ENCODE measurements at regions of chr5 and their contacts with region 1.

Region 1: DNA sequence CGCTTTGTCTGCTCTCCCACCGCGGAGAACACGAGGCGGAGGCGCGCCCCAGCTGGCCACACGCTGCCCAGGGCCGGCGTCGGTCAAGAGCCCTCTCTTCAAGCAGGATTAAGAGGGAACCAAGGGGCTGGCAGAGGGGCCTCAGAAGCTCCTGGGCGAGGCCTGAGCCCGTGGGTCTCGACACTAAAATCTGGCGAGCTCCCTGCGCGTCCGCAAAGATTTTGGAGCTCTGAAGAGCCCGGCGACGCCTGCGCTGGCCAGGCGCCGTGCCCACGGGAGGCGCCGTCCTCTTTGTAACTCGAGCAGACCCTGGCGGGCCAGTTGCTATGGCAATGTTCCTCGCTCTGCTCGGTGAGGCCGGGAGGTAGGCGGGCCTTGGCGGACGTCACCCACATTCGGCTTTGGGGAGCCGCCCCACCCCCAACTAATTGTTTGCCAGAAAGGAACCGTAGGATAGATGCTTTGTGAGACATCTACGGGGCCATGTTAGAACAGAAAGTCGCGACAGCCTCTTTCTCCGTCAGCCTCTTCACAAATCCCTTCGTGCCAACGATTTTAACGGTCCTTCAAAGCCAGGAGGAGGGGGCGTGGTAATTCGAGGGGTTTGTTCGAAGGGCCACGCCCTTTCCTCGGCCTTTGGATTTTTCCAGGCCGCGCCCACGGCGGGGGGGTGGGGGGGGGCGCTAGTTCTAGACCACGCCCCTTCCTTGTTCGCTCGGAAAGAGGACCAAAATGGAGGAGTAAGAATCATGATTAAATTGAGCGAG is 714 bp upstream of the CNOT8 start:
- DNase-seq: peak; percentile 78 to 94
- ATAC-seq: peak; percentile 53 to 75 (median 59)
- H3K4me3 ChIP-seq: peak overlapping the region; percentile 80
- H3K4me3 Mint-ChIP-seq: peak overlapping the region; percentile 94
- H3K27ac ChIP-seq: peak overlapping the region; percentile 98
- H3K27ac Mint-ChIP-seq: peak overlapping the region; percentile 96 to 98
- H3K4me1 ChIP-seq: peaks cover 22% of the 10 kb centered on the region
- H3K4me1 Mint-ChIP-seq: peaks cover 55 to 57% of the 10 kb centered on the region in 2 donors
- H3K27me3 ChIP-seq: no peaks in the 10 kb centered on the region
- H3K27me3 Mint-ChIP-seq: no peaks in the 10 kb centered on the region
- CTCF ChIP-seq: no peak

Region 2: DNA sequence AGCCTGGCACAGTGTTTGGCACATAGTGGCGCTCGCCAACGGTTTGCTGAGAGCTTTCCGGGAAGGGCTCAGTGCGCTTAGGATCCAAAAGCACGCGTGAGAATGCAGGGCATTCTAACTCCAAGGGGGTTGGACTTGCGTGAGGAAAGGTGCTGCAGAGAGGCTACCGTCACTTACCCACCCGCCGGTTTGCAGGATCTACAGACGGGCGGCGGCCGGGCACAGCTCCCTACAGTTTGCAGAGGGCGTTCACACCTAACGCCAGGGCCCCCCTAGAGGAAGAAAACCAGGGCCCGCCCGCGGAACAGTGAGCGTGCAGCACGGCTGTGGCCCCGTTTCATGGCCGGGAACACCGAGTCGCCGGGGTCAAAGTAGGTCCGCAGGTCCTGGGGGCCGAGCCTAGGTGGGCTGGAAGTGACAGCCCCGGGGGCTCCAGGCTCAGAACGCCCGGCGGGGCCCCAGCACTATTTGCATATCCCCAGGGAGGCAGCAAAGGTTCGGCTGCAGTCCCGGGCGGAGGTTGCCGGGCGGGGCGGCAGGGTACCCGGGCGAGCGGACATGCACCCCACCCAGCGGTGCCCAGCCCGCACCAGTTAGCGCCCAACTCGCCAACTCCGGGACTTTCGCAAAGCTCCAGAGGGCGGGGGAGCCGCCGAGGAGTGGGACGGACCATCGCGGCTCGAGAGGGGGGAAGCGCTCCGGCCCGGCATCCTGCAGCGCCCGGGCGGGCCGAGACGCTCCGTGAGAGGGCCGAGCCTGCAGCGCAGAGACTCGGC is 667.7 kb before region 1 on chr5:
- intact Hi-C with region 1: loop called (anchors 5 kb)
- DNase-seq: peak; percentile 83 to 93
- ATAC-seq: peak; percentile 89 to 96 (median 90)
- H3K4me3 ChIP-seq: peak overlapping the region; percentile 96
- H3K4me3 Mint-ChIP-seq: peak overlapping the region; percentile 92
- H3K27ac ChIP-seq: peak overlapping the region; percentile 84
- H3K27ac Mint-ChIP-seq: peak overlapping the region; percentile 80 to 88
- H3K4me1 ChIP-seq: peaks cover 29% of the 10 kb centered on the region
- H3K4me1 Mint-ChIP-seq: peaks cover 46 to 54% of the 10 kb centered on the region in 2 donors
- H3K27me3 ChIP-seq: no peaks in the 10 kb centered on the region
- H3K27me3 Mint-ChIP-seq: no peaks in the 10 kb centered on the region
- CTCF ChIP-seq: peak; percentile 41

Region 3: GRCh38 chr5:154445422-154446182 is 412.1 kb before region 1 on chr5 and contains the start of gene SAP30L:
- intact Hi-C with region 1: loop called (anchors 5 kb)
- DNase-seq: peak; percentile 97
- ATAC-seq: peak; percentile 94 to 99 (median 95)
- H3K4me3 ChIP-seq: peak within 1 kb of the TSS; percentile 99
- H3K4me3 Mint-ChIP-seq: peak within 1 kb of the TSS; percentile 99
- H3K27ac ChIP-seq: peak within 1 kb of the TSS; percentile 76
- H3K27ac Mint-ChIP-seq: peak within 1 kb of the TSS; percentile 92 to 99
- H3K4me1 ChIP-seq: peaks cover 24% of the 10 kb centered on the region
- H3K4me1 Mint-ChIP-seq: peaks cover 56 to 68% of the 10 kb centered on the region in 2 donors
- H3K27me3 ChIP-seq: no peaks in the 10 kb centered on the region
- H3K27me3 Mint-ChIP-seq: no peaks in the 10 kb centered on the region
- CTCF ChIP-seq: no peak
- total RNA-seq, gene SAP30L: 37.0 to 48.4 (median 47.6) TPM

Region 4: DNA sequence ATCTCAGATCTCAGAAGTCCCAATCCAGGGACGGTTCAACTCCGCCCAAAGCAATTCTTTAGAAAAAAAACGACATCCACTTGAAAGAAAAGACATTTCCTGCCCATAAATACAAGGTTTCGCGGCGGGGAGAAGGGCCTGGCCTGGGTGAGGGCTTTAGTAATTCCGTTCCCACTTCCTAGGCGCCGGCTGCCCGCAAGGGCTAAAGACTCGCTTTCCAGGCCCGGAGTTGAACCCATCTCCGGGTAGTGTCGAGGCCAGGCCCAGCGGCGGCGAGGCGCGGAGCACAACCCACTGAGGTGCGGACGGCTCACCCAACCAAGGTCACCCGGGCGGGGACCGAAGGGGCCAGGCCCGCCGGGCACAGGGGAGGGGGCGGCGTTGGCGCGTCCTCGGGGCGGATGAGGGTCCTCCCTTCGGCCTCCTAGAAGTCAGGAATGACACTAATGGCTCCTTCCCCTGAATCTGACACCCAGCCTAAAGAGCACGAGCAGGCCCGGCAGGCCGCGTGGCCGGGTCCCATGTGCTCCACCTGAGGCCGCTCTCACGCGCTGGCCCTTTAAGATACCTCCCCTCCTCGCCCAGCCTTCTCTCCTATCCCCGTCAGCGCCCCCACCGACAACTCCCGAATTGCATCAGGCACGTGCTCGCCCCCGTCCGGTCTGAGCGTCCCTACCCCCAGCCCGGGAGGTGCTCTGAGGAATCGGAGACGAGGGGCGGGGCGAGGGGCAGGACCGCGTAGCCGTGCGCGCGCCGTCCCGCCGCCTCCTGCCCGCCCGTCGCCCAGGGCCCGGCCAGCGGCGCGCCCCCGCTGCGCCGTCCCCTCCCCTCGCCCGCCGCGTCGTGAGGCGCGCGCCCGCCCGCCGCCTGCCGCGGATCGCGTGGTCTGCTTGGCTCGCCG is 103.0 kb before region 1 on chr5:
- intact Hi-C with region 1: loop called (anchors 1 kb)
- DNase-seq: peak; percentile 97 to 99
- ATAC-seq: peak; percentile 86 to 97 (median 91)
- H3K4me3 ChIP-seq: peak overlapping the region; percentile 56
- H3K4me3 Mint-ChIP-seq: peak overlapping the region; percentile 86
- H3K27ac ChIP-seq: peak overlapping the region; percentile 94
- H3K27ac Mint-ChIP-seq: peak overlapping the region; percentile 89 to 90
- H3K4me1 ChIP-seq: peaks cover 22% of the 10 kb centered on the region
- H3K4me1 Mint-ChIP-seq: peaks cover 40 to 41% of the 10 kb centered on the region in 2 donors
- H3K27me3 ChIP-seq: no peaks in the 10 kb centered on the region
- H3K27me3 Mint-ChIP-seq: no peaks in the 10 kb centered on the region
- CTCF ChIP-seq: peak; percentile 42

Region 5: DNA sequence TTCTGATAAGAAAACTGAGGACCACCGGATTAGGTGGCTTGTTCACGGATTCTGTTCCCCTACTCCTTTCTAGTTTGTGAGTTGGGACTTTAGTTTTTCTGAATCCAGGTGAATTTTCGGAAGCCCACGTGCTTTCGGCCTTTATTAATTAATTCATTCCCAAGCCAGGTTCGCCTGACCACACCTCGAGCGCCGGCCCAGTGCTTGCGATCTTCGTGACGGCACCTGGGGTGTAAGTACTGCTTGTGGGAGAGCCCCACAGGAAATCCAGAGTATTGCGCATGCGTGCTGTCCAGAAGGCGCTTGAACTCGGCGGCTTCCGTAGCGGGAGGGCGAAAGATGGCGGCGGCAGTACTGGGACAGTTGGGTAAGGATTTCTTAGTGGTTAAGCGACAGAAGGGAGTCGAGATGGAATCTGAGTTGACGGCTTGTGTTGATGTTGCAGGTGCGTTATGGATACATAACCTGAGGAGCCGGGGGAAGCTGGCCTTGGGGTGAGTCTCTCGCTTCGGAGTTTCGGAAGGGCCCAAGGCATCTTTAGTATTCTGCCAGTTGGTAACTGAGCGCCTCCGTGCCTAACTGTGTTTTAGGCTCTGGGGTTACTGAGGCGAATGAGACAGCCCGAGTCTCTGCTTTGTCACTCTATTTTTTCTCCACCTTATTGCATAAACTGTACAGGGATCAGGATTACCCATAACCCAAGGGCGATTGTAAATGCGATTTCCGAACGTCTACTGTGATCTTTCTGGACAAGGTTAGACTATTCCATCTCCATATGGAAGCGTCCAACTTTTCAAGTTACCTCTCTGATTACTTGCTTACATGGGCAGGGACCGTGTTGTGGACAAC is 83.3 kb after region 1 on chr5 and contains the start of gene MRPL22:
- intact Hi-C with region 1: loop called (anchors 2 kb)
- DNase-seq: peak; percentile 92 to 98
- ATAC-seq: peak; percentile 66 to 84 (median 69)
- H3K4me3 ChIP-seq: peak within 1 kb of the TSS; percentile 67
- H3K4me3 Mint-ChIP-seq: peak within 1 kb of the TSS; percentile 99
- H3K27ac ChIP-seq: peak within 1 kb of the TSS; percentile 82
- H3K27ac Mint-ChIP-seq: peak within 1 kb of the TSS; percentile 97 to 99
- H3K4me1 ChIP-seq: peaks cover 23% of the 10 kb centered on the region
- H3K4me1 Mint-ChIP-seq: peaks cover 30 to 40% of the 10 kb centered on the region in 2 donors
- H3K27me3 ChIP-seq: no peaks in the 10 kb centered on the region
- H3K27me3 Mint-ChIP-seq: no peaks in the 10 kb centered on the region
- CTCF ChIP-seq: no peak
- total RNA-seq, gene MRPL22: 30.5 to 38.0 (median 30.9) TPM